ENCODE measurements at regions of chr22 and their contacts with region 1.

Region 1: DNA sequence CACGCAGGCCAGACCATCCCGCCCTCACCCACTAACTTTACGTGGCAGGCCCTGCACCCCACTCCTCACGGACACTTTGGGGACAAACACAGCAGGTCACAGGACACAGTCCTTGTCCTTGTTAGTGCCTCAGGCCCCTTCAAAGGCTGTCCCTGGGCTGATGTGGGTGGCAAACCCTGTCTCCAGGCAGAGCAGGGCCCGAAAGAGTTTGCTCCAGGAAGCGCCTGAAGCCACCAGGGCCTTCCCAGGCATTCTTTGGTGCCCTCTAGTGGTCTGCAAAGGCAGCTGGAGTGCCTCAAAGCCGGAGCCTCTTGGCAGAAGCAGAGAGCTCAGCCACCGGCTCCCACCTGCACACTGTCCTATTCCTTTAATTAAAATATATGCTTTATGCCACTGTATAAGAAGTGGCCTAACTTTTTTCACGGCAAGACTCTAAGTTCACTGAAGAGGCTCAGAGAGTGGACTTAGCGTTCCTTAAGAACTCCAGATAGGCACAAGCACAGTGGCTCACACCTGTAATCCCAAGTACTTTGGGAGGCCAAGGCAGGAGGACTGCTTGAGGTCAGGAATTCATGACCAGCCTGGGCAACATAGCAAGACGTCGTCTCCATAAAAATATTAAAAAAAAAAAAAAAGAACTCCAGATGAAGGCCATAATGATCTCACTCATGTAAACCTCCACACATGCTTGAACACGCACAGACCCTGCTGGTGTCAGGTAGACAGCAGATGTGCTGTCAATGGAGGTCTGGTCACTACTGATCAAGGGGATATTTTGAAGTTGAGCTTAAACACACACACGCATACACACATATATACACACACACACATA is 11.1 kb downstream of the TXN2 start:
- DNase-seq: peak; percentile 83
- ATAC-seq: peak; percentile 67

Region 2: GRCh38 chr22:36301384-36301828 is 169.0 kb before region 1 on chr22:
- intact Hi-C with region 1: loop called (anchors 5 kb)
- DNase-seq: peak; percentile 84
- ATAC-seq: peak; percentile 56

Measured in left ventricle myocardium superior (tissue), 1 donor.